Activated CD4-positive, alpha-beta memory T cell treated with anti-CD3 and anti-CD28 coated beads, Interleukin-2, amount 10 ng/mL, durations not matched to agents 7 days and 5 days (primary cell): ENCODE measurements at regions of chr13 and their contacts with region 1.

Region 1: DNA sequence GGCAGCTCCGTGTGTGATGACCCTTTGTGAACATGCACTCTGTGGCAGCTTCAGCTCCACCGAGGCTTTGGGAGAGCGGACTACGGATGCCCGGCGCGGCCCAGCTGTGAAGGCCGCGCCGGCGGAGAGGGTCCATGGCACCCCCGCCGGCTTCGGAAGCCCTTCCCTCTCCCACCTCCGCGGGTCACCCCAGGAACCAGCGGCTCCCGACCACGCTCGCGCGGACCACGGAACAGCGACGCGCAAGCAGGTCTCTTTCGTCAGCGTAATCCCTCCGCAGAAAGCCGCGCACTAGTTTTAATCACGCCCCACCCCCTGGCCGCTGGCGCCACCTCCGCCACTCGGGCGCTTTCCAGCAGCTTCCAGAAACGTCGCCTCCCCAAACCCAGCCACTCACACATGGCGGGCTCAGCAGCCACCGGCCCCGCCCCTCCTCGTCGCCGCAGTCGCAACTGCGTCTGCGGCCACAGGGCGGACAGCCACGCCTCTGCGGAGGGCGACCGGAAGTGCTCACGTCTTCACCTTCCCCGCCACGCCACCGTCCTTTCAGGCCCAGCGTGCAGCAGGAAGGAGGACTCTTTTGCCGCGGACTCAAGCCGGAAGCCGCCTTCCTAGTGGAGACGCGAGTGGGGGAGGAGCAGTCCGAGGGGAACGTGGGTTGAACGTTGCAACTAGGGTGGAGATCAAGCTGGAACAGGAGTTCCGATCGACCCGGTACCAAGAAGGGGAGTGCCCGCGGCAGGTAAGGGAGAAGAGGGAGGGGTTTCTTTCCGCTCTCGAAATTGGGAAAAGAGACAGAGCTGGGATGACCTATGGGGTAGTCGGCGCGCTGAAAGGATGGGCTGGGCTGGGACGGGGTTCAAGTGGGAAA is at the start of gene USPL1:
- DNase-seq: peak; percentile 99
- H3K4me3 Mint-ChIP-seq: no peak within 1 kb of the TSS
- H3K27ac Mint-ChIP-seq: no peak within 1 kb of the TSS
- H3K4me1 Mint-ChIP-seq: peaks cover 23% of the 10 kb centered on the region
- H3K27me3 Mint-ChIP-seq: no peaks in the 10 kb centered on the region
- total RNA-seq, gene USPL1: 19.7 to 21.8 TPM

Region 2: GRCh38 chr13:30306762-30307193 is 310.8 kb before region 1 on chr13:
- CTCF ChIA-PET with region 1: interaction called, 3 read pairs
- POLR2A ChIA-PET with region 1: interaction called, 19 read pairs
- DNase-seq: peak; percentile 92
- H3K4me3 Mint-ChIP-seq: peak overlapping the region; percentile 77
- H3K27ac Mint-ChIP-seq: peak overlapping the region; percentile 78
- H3K4me1 Mint-ChIP-seq: peaks cover 49% of the 10 kb centered on the region
- H3K27me3 Mint-ChIP-seq: no peaks in the 10 kb centered on the region

Region 3: DNA sequence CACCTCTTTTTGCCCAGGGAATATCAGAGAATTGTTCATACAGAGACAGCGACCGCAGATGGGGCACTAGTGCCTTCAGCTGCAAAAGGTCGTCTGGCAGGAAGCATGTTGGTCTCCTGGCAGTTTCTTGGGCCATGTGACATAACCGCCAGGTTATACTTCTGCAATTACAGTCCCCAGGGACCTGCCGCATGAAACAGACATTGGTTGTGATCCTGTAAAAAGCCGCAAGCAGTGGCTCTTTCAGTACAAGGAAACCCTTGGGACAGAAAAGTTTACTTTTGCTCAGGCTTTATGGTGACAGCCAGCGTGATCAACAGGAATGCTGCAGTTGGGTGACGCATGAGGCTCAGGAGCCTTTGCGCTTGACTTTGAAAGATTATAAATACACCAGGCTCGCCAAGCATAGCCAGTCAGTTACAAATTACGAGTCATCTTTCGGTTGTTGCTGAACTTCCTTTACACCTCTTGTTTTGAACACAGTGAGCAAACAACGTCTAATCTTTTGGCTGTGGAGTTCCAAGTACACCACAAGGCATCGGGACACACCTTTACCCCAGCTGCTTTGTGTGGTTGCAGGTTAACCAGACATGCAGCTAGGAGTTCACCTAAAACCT is 245.8 kb before region 1 on chr13:
- CTCF ChIA-PET with region 1: interaction called, 4 read pairs
- POLR2A ChIA-PET with region 1: interaction called, 34 read pairs
- DNase-seq: peak; percentile 73
- H3K4me3 Mint-ChIP-seq: peak overlapping the region; percentile 78
- H3K27ac Mint-ChIP-seq: peak overlapping the region; percentile 96
- H3K4me1 Mint-ChIP-seq: peaks cover 79% of the 10 kb centered on the region
- H3K27me3 Mint-ChIP-seq: no peaks in the 10 kb centered on the region

Region 4: GRCh38 chr13:30572859-30573275 is 44.7 kb before region 1 on chr13:
- CTCF ChIA-PET with region 1: interaction called, 14 read pairs
- POLR2A ChIA-PET with region 1: interaction called, 32 read pairs
- DNase-seq: peak; percentile 24
- H3K4me3 Mint-ChIP-seq: peak overlapping the region; percentile 51
- H3K27ac Mint-ChIP-seq: peak overlapping the region; percentile 38
- H3K4me1 Mint-ChIP-seq: peaks cover 49% of the 10 kb centered on the region
- H3K27me3 Mint-ChIP-seq: peaks cover 10% of the 10 kb centered on the region

Region 5: GRCh38 chr13:30659980-30660379 is 42.4 kb after region 1 on chr13:
- CTCF ChIA-PET with region 1: no interaction called
- POLR2A ChIA-PET with region 1: interaction called, 24 read pairs
- DNase-seq: no peak
- H3K4me3 Mint-ChIP-seq: no peak overlapping the region
- H3K27ac Mint-ChIP-seq: no peak overlapping the region
- H3K4me1 Mint-ChIP-seq: peaks cover 35% of the 10 kb centered on the region
- H3K27me3 Mint-ChIP-seq: no peaks in the 10 kb centered on the region

Region 6: GRCh38 chr13:30712536-30713532 is 95.3 kb after region 1 on chr13:
- CTCF ChIA-PET with region 1: no interaction called
- POLR2A ChIA-PET with region 1: no interaction called
- DNase-seq: peak; percentile 29
- H3K4me3 Mint-ChIP-seq: no peak overlapping the region
- H3K27ac Mint-ChIP-seq: peak overlapping the region; percentile 37
- H3K4me1 Mint-ChIP-seq: peaks cover 27% of the 10 kb centered on the region
- H3K27me3 Mint-ChIP-seq: no peaks in the 10 kb centered on the region

Region 7: GRCh38 chr13:30774214-30774730 is 156.7 kb after region 1 on chr13:
- CTCF ChIA-PET with region 1: interaction called, 3 read pairs
- POLR2A ChIA-PET with region 1: interaction called, 16 read pairs
- DNase-seq: peak; percentile 54
- H3K4me3 Mint-ChIP-seq: peak overlapping the region; percentile 31
- H3K27ac Mint-ChIP-seq: peak overlapping the region; percentile 89
- H3K4me1 Mint-ChIP-seq: peaks cover 40% of the 10 kb centered on the region
- H3K27me3 Mint-ChIP-seq: peaks cover 6% of the 10 kb centered on the region